Right cardiac atrium (tissue), 5 donors: ENCODE measurements at regions of chr1 and their contacts with region 1.

Region 1: DNA sequence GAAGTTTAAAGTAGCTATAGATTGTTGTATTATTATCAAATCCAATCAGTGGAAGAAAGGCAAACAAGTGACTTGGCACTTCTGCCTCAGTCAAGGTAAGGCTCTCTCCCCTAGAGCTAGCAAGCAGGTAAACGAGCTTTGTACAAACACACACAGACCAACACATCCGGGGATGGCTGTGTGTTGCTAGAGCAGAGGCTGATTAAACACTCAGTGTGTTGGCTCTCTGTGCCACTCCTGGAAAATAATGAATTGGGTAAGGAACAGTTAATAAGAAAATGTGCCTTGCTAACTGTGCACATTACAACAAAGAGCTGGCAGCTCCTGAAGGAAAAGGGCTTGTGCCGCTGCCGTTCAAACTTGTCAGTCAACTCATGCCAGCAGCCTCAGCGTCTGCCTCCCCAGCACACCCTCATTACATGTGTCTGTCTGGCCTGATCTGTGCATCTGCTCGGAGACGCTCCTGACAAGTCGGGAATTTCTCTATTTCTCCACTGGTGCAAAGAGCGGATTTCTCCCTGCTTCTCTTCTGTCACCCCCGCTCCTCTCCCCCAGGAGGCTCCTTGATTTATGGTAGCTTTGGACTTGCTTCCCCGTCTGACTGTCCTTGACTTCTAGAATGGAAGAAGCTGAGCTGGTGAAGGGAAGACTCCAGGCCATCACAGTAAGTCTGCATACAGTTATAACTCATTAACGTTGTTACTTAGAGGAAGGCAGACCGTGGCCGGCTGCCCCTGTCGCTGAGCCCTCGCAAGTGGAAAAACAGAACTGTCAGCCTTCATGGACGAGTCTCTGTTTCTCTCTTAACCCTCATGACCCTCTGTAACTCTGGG is at the start of gene PALMD:
- DNase-seq: peak; percentile 67 to 79 (median 77)
- ATAC-seq: peak; percentile 75 to 78
- H3K4me3 ChIP-seq: peak within 1 kb of the TSS; percentile 91
- H3K27ac ChIP-seq: peak within 1 kb of the TSS; percentile 99
- H3K4me1 ChIP-seq: peaks cover 7% of the 10 kb centered on the region
- H3K27me3 ChIP-seq: no peaks in the 10 kb centered on the region
- total RNA-seq, gene PALMD: 71.9 to 79.6 (median 75.5) TPM

Region 2: DNA sequence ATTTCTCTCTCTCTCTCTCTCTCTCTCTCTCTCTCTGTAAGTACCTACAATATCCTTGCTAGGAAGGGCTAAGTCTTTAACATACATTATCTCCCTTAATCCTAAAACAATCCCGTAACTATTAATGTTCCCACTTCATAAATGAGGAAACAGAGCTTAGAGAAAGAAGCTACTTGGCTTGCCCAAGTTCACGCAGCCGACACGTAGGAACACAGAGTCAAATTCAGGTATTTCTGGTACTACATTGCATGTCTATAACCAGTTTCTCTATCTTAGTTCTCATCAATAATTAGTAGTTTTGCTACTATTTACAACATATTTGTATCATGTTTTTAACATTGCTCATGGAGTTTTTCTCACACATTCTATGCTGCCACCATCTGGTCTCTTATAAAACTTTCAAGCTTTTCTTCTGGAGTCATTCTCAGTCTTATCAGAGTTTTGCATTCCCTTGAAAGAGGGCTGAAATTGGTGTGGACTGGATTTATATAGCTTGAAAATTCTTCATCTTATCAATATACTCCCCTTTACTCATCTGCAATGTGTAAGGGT is 118.9 kb before region 1 on chr1:
- intact Hi-C with region 1: loop called in 1 of 4 experiments (anchors 5 kb)
- DNase-seq: no peak
- ATAC-seq: peak in 1 of 2 donors; percentile 36
- H3K4me3 ChIP-seq: no peak overlapping the region
- H3K27ac ChIP-seq: no peak overlapping the region
- H3K4me1 ChIP-seq: no peaks in the 10 kb centered on the region
- H3K27me3 ChIP-seq: no peaks in the 10 kb centered on the region

Region 3: DNA sequence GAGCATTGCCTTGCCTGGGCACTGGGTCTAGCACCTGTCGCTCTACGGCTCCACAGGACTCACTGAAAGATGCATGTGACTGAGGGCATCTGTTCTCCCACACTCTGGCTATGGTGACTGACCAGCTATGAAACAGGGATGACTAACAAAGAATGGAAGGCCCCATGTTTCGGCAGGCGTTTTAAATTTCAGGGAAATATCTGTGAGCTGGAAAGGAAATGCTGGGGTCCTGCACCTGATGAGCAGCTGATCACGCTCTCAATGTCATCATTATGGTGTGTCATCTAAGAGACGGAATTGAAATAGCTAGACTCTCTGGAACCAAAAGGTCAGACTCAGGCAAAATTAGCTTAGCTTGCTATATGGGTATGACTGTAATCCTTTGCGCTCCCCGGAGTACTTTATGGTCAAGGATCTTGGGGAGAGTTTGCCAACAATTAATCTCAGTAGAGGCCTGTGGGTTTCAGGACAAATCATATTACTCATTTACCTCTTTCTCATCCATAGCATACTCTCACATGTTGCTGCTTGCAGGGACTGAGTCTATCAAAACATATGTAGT is 24.5 kb before region 1 on chr1:
- intact Hi-C with region 1: no loop called
- DNase-seq: no peak
- ATAC-seq: no peak
- H3K4me3 ChIP-seq: no peak overlapping the region
- H3K27ac ChIP-seq: no peak overlapping the region
- H3K4me1 ChIP-seq: no peaks in the 10 kb centered on the region
- H3K27me3 ChIP-seq: no peaks in the 10 kb centered on the region

Region 4: DNA sequence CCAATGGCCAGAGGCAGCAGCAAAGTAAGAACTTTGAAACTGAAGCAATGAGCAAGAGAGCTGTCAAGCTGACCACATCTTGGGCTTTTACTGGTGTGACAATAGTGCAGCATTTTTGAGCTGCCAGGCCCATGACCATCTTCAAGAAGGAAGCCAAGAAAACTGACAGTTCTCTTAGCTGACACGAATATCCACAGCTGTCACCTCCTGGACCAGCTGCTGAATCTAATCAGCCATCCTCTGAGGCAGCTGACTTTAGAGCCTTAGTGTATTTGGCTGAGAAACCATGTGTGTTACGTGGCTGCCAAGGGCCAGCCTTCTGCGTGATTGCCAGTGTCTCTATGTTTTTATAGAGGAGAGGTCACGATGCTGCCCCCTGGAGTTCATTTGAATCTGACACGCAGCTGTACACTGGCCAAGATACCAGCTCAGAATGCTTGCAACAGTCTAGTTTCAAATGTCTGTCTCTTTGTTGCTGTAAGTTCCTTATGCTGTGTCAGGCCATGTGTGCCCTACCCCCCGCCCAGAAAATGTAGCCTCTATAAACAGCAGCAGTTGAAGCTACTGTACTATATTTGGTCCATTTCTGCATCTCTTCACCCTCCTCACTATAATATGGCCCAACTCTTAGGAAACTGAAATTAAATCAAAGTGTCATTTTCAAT is 39.7 kb after region 1 on chr1:
- intact Hi-C with region 1: loop called in 2 of 4 experiments (anchors 5 kb)
- DNase-seq: peak; percentile 85 to 92 (median 87)
- ATAC-seq: peak; percentile 93 to 94
- H3K4me3 ChIP-seq: no peak overlapping the region
- H3K27ac ChIP-seq: peak overlapping the region; percentile 96
- H3K4me1 ChIP-seq: peaks cover 9% of the 10 kb centered on the region
- H3K27me3 ChIP-seq: no peaks in the 10 kb centered on the region